HepG2 (cell line): ENCODE measurements at regions of chr22 and their contacts with region 1.

Region 1: GRCh38 chr22:40588726-40589125 is 47.8 kb downstream of the MRTFA start:
- DNase-seq: peak; percentile 94
- ATAC-seq: peak; percentile 97
- H3K4me3 ChIP-seq: peak overlapping the region in 1 of 3 experiments; percentile 30; a peak in 1 of 6 replicates
- H3K27ac ChIP-seq: peak overlapping the region; percentile 74
- H3K4me1 ChIP-seq: peaks cover 56% of the 10 kb centered on the region
- H3K27me3 ChIP-seq: no peaks in the 10 kb centered on the region
- CTCF ChIP-seq: no peak
- EP300 ChIP-seq: peak; percentile 45 to 72; a peak in 2 of 4 replicates
- POLR2A ChIP-seq: no peak
- RAD21 ChIP-seq: no peak

Region 2: GRCh38 chr22:40436505-40437451 is 151.9 kb before region 1 on chr22:
- CTCF ChIA-PET with region 1: no interaction called
- POLR2A ChIA-PET with region 1: no interaction called
- in situ Hi-C with region 1: no loop called
- intact Hi-C with region 1: no loop called
- DNase-seq: peak; percentile 41
- ATAC-seq: peak; percentile 61
- H3K4me3 ChIP-seq: no peak overlapping the region
- H3K27ac ChIP-seq: no peak overlapping the region
- H3K4me1 ChIP-seq: peaks cover 16% of the 10 kb centered on the region
- H3K27me3 ChIP-seq: no peaks in the 10 kb centered on the region
- CTCF ChIP-seq: peak; percentile 58
- EP300 ChIP-seq: no peak
- POLR2A ChIP-seq: no peak
- RAD21 ChIP-seq: peak; percentile 59; the same call in 1 of the 2 replicates

Region 3: DNA sequence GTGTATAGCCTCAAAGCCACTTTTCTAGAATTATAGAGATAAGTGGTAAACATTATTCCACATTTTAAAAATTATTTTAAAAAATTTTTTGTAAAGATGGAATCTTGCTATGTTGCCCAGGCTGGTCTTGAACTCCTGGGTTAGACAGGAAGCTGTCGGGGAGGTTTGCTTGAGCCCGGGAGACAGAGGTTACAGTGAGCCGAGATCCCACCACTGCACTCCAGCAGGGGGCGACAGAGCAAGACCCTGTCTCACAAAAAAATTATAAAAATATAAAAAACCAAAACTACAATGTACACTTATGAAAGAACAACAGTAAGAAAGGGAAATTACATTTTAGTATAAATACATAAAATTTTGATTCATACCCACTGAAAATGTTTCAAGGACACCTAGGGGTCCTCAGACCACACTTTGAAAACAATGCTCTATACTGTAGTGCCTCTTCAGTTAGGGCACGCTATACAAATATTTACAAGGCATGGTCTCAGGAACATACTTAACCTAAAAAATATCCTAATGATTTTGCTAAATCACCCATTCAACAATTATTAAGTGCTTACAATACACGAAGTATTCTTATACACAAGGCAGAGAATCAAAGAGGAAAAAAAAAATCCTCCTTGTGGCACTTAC is 63.4 kb before region 1 on chr22:
- CTCF ChIA-PET with region 1: no interaction called
- POLR2A ChIA-PET with region 1: no interaction called
- in situ Hi-C with region 1: no loop called
- intact Hi-C with region 1: loop called (anchors 10 kb)
- DNase-seq: peak; percentile 31
- ATAC-seq: peak; percentile 67
- H3K4me3 ChIP-seq: no peak overlapping the region
- H3K27ac ChIP-seq: peak overlapping the region; percentile 30
- H3K4me1 ChIP-seq: peaks cover 34% of the 10 kb centered on the region
- H3K27me3 ChIP-seq: no peaks in the 10 kb centered on the region
- CTCF ChIP-seq: peak; percentile 64
- EP300 ChIP-seq: no peak
- POLR2A ChIP-seq: no peak
- RAD21 ChIP-seq: peak; percentile 46; the same call in 1 of the 2 replicates

Region 4: DNA sequence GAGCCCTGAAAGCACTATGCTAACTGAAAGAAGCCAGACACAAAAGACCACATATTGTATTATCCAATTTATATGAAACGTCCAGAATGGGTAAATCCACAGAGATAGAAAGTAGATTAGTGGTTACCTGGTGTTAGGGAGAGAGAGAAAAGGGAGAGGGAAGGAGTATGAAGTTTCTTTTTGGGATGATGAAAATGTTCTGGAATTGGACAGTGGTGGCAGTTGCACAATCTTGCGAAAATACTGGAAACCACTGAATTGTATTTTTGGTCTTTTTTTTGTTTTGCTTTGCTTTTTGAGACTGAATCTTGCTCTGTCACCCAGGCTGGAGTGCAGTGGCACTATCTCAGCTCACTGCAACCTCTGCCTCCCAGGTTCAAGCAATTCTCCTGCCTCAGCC is 15.8 kb before region 1 on chr22:
- CTCF ChIA-PET with region 1: no interaction called
- POLR2A ChIA-PET with region 1: no interaction called
- in situ Hi-C with region 1: no loop called
- intact Hi-C with region 1: loop called (anchors 2 kb)
- DNase-seq: no peak
- ATAC-seq: no peak
- H3K4me3 ChIP-seq: no peak overlapping the region
- H3K27ac ChIP-seq: no peak overlapping the region
- H3K4me1 ChIP-seq: peaks cover 49% of the 10 kb centered on the region
- H3K27me3 ChIP-seq: no peaks in the 10 kb centered on the region
- CTCF ChIP-seq: no peak
- EP300 ChIP-seq: no peak
- POLR2A ChIP-seq: no peak
- RAD21 ChIP-seq: no peak

Region 5: DNA sequence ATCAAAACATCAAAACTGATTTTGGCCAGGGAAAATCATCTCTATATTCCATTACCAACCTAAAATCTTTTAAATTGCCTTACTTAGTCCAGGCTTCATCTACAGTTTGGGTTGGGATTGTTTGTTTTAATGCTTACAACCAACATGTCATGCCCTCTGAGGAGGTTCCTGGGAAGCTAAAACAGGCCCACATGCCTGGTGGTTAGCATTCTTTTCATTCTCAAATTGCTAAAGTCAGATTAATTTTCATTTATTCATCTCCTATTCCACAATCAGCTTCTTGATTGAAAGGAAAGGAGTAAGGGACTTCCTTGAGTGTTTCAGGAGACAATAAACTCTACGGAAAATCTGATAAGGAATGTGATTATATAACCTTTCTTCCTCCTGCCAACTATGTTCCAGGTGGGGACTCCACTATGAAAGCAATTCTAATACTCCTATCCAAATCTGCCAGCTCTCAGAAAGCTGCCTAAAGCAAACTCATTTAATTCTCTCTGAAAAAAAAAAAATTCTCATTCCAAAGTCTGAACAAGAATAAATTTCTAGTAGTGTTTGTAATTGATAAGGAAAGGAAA is 17.0 kb after region 1 on chr22:
- CTCF ChIA-PET with region 1: no interaction called
- POLR2A ChIA-PET with region 1: no interaction called
- in situ Hi-C with region 1: no loop called
- intact Hi-C with region 1: no loop called
- DNase-seq: no peak
- ATAC-seq: no peak
- H3K4me3 ChIP-seq: no peak overlapping the region
- H3K27ac ChIP-seq: no peak overlapping the region
- H3K4me1 ChIP-seq: peaks cover 55% of the 10 kb centered on the region
- H3K27me3 ChIP-seq: no peaks in the 10 kb centered on the region
- CTCF ChIP-seq: no peak
- EP300 ChIP-seq: no peak
- POLR2A ChIP-seq: no peak
- RAD21 ChIP-seq: no peak

Region 6: DNA sequence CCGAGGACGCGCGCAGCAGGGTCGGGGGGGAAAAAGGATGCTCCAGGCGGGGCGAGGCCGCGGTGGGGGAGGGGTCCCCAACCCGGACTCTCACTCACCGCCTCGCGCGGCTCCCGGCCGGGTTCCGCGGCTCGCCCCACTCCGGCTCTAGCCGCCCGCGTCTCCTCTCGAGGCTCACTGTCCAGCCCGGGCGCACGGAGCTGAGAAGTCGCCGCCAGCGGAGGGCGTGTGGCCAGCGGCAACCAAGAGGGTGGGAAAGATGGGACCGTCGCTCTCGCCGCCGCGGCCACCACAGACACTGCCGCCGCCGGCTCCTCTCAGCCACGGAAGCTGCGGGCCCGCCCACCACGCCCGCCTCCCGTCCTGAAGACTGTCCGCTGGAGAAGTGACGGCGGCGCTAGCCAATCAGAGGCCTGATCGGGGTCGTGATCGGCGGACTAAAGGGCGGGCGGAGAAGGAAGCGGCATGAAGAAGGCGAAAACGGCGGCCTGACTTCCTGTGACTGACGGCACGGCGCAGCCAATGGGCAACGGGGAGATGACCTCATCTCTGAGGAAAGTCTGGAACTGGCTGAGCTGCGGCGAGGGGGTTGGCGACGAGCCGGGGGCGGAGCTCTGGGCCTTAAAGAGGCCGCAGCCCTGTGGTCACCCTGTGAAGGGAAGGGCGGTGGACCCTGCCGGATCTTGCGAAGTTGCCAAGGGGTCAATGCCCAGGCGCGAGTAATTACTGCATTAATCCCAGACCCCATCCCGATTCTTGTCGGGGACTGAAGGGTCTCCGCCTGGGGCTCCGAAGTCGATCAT is 47.9 kb after region 1 on chr22 and contains the start of gene MRTFA:
- CTCF ChIA-PET with region 1: no interaction called
- POLR2A ChIA-PET with region 1: interaction called, 6 read pairs
- in situ Hi-C with region 1: no loop called
- intact Hi-C with region 1: loop called (anchors 10 kb)
- DNase-seq: peak; percentile 98
- ATAC-seq: peak; percentile 95
- H3K4me3 ChIP-seq: peak within 1 kb of the TSS; percentile 98 to 100 (median 99)
- H3K27ac ChIP-seq: peak within 1 kb of the TSS; percentile 82
- H3K4me1 ChIP-seq: peaks cover 45% of the 10 kb centered on the region
- H3K27me3 ChIP-seq: no peaks in the 10 kb centered on the region; a peak in 1 of 5 replicates
- CTCF ChIP-seq: no peak; the same call in 1 of the 2 replicates
- EP300 ChIP-seq: no peak
- POLR2A ChIP-seq: peak; percentile 82 to 84
- RAD21 ChIP-seq: peak; percentile 69; the same call in 1 of the 2 replicates
- total RNA-seq, gene MRTFA: 8.2 and 9.9 TPM in 2 replicates